ENCODE measurements at regions of chr2 and their contacts with region 1.

Region 1: GRCh38 chr2:108583903-108584520 is 49.7 kb downstream of the LIMS1 start:
- DNase-seq: no peak
- H3K4me3 ChIP-seq: no peak overlapping the region
- H3K27me3 ChIP-seq: no peaks in the 10 kb centered on the region
- CTCF ChIP-seq: peak; percentile 81

Region 2: DNA sequence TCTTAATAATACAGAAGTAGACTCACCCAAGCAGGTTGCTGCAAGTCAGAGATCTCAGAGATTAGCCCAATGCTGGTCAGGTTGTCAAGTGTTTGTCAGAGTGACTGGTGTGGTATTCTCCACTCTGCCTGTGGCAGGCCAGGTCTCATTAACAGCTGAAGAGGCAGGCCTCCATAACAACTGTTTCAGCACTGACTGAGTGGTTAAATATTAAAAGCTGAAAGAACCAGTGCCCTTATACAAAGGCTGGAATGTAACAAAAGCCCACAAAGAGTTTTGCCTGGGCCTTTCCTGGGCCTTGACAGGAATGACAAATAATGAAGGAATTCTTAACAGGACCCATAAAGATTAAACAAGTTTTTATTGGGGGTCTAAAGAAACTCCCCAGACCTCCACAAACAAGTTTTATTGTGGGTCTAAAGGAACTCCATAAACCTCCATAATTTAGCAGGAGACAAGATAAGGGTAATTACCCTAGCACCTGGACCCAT is 268.5 kb before region 1 on chr2:
- CTCF ChIA-PET with region 1: no interaction called
- POLR2A ChIA-PET with region 1: no interaction called
- DNase-seq: no peak
- H3K4me3 ChIP-seq: no peak overlapping the region
- H3K27me3 ChIP-seq: no peaks in the 10 kb centered on the region; the same call in 1 of the 2 replicates
- CTCF ChIP-seq: no peak

Region 3: DNA sequence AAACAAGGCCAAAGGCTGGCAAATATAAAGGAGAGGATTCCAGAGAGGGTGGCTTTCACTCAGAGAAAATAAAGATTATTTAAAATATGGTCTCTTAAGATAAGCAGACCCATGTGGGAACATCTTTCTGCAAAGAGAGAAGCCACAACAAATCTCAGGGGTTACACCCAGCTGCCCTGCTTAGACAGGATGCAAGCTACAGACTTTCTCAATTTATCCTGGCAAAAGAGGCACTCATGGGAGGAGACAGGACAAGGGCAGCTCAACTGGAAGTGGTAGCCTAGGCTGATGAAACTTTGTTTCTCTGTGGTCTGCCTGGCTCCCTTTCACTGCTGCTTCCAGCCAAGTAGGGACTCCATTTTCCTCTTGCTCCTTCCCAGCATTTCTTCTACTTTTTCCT is 232.1 kb before region 1 on chr2:
- CTCF ChIA-PET with region 1: interaction called, 17 read pairs
- POLR2A ChIA-PET with region 1: no interaction called
- DNase-seq: no peak
- H3K4me3 ChIP-seq: no peak overlapping the region
- H3K27me3 ChIP-seq: peaks cover 4% of the 10 kb centered on the region
- CTCF ChIP-seq: no peak

Region 4: DNA sequence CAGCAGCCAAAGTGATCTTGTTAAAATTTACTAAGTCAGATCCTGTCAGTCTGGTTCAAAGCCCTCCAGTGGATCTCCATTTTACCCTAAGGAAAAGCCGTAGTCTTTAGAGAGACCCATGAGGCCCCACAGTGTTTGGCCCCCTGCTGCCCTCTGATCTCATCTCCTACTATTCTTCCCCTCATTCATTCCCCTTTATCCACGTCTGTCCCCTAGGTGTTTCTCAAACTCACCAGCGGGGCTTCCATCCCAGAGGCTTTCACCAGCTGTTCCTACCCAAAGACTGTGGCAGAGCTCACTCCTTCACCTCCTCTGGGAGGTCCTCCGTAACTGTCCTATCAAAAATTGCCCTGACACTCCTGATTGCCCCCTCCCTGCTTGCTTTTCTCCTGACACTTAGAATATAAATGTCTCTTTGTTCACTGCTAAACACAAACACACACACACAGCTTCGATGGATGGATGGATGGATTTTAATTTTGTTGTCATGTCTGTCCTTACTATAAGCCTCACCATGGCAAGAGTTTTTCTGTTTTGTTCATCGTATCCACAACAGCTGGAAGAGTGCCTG is 23.7 kb before region 1 on chr2:
- CTCF ChIA-PET with region 1: no interaction called
- POLR2A ChIA-PET with region 1: no interaction called
- DNase-seq: no peak
- H3K4me3 ChIP-seq: no peak overlapping the region
- H3K27me3 ChIP-seq: no peaks in the 10 kb centered on the region
- CTCF ChIP-seq: no peak

Region 5: DNA sequence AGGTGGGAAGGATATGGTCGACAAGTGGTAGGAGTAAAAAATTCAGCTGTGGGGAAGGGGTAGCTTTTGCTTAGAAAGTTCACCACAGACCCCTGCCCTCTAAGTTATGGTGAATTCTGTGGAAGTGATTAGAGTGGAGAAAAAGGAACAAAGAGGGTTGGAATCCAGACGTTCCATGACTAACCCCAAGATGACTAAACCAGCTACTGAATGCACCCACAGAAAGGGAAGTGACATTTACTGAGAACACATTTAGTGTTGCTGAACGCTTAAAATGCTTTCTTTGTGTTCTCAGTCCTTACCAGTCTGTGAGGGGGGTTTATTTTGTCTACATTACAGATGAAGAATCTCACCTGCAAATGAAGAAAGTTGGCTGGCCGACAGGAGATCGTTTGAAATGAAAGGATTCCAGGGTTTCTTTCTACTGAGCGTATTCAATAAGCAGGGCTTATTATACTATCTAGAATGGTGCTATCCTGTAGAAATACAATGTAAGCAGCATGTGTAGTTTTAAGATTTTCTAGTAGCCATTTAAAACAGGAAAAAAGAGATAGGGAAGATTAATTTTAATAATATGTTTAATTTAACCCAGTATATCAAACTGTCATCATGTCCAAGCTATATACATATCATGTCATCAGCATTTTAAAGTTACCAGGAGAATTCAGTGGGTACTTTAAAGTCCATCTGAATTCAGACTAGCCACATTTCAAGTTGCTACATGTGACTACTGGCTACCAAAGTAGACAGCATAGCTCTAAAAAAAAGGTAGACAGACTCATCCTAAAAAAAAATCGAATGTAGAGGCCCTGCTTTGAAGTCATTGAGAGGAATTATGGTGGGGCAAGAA is 10.3 kb after region 1 on chr2:
- CTCF ChIA-PET with region 1: interaction called, 14 read pairs
- POLR2A ChIA-PET with region 1: no interaction called
- DNase-seq: peak; percentile 56
- H3K4me3 ChIP-seq: no peak overlapping the region
- H3K27me3 ChIP-seq: no peaks in the 10 kb centered on the region
- CTCF ChIP-seq: no peak

Region 6: GRCh38 chr2:108823281-108823680 is 239.3 kb after region 1 on chr2:
- CTCF ChIA-PET with region 1: no interaction called
- POLR2A ChIA-PET with region 1: no interaction called
- DNase-seq: no peak
- H3K4me3 ChIP-seq: no peak overlapping the region
- H3K27me3 ChIP-seq: no peaks in the 10 kb centered on the region
- CTCF ChIP-seq: no peak